Heart left ventricle (tissue), 16 donors: ENCODE measurements at regions of chr5 and their contacts with region 1.

Region 1: GRCh38 chr5:76771705-76772405 is 47.0 kb upstream of the F2RL1 start:
- DNase-seq: no peak
- ATAC-seq: no peak
- H3K4me3 ChIP-seq: no peak overlapping the region
- H3K27ac ChIP-seq: no peak overlapping the region
- H3K4me1 ChIP-seq: peaks cover 0 to 6% (median 0%) of the 10 kb centered on the region in 12 donors
- H3K27me3 ChIP-seq: no peaks in the 10 kb centered on the region
- CTCF ChIP-seq: no peak
- POLR2A ChIP-seq: no peak

Region 2: DNA sequence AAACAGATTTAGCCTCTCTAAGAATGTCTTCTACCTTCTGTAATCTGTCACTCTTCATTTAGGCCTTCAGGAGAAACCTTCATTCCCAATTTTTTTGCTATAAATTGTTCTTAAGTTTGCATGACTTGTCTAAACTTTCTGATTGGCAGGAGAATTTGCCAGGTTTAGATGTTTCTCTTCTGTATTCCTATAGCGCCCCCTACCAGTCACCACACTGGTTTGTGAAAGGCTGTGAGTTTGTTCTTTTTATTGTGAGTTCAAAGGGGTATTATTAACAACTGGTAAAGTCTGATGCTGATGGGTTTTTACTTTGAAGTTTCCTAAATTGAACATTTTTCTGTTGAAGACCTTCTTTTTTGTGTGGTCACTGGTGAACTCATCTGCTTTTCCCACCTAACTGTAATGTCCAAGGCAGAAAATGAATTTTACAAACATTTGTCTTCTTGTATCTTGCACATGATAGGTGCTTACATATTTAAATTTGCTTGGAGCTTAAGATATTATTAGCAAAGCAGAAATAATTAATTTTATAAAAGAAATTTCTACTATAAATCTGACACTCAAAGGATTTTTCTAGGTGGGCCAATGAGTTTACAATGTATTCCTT is 130.2 kb before region 1 on chr5:
- intact Hi-C with region 1: loop called in 1 of 10 experiments (anchors 5 kb)
- DNase-seq: peak in 4 of 5 donors; percentile 35 to 68 (median 50)
- ATAC-seq: peak in 1 of 4 donors; percentile 49
- H3K4me3 ChIP-seq: no peak overlapping the region
- H3K27ac ChIP-seq: no peak overlapping the region
- H3K4me1 ChIP-seq: peaks cover 0 to 19% (median 0%) of the 10 kb centered on the region in 12 donors
- H3K27me3 ChIP-seq: no peaks in the 10 kb centered on the region
- CTCF ChIP-seq: peak; percentile 46 to 76 (median 66)
- POLR2A ChIP-seq: no peak

Region 3: DNA sequence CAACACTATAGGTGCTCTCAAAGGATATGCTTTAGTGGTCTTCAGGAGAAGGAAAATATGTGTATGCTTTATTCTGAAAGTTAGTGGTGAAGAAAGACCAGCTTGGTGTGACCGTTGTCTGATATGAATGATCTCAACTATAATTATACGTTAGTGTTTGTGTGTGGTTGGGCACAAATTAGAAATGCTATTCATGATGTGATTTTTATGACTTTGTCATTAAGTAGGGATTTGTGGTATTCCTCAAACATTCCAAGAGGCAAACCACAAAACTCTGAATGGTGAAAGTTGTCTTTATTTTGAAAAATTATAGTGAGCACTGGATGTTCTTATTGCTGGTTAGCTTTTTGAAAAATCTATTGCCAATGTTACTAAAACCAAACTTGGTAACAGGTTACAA is 62.1 kb before region 1 on chr5:
- intact Hi-C with region 1: no loop called
- DNase-seq: no peak
- ATAC-seq: peak in 1 of 4 donors; percentile 20
- H3K4me3 ChIP-seq: no peak overlapping the region
- H3K27ac ChIP-seq: peak overlapping the region in 1 of 12 donors; percentile 53
- H3K4me1 ChIP-seq: peaks cover 0 to 17% (median 0%) of the 10 kb centered on the region in 12 donors
- H3K27me3 ChIP-seq: peaks cover 0 to 4% (median 0%) of the 10 kb centered on the region in 9 donors
- CTCF ChIP-seq: no peak
- POLR2A ChIP-seq: no peak

Region 4: GRCh38 chr5:76813982-76814562 is 42.2 kb after region 1 on chr5:
- intact Hi-C with region 1: no loop called
- DNase-seq: no peak
- ATAC-seq: no peak
- H3K4me3 ChIP-seq: no peak overlapping the region
- H3K27ac ChIP-seq: no peak overlapping the region
- H3K4me1 ChIP-seq: peaks cover 0 to 10% (median 2%) of the 10 kb centered on the region in 12 donors
- H3K27me3 ChIP-seq: peaks cover 0 to 18% (median 8%) of the 10 kb centered on the region in 9 donors
- CTCF ChIP-seq: no peak
- POLR2A ChIP-seq: no peak